ENCODE measurements at regions of chr5 and their contacts with region 1.

Region 1: DNA sequence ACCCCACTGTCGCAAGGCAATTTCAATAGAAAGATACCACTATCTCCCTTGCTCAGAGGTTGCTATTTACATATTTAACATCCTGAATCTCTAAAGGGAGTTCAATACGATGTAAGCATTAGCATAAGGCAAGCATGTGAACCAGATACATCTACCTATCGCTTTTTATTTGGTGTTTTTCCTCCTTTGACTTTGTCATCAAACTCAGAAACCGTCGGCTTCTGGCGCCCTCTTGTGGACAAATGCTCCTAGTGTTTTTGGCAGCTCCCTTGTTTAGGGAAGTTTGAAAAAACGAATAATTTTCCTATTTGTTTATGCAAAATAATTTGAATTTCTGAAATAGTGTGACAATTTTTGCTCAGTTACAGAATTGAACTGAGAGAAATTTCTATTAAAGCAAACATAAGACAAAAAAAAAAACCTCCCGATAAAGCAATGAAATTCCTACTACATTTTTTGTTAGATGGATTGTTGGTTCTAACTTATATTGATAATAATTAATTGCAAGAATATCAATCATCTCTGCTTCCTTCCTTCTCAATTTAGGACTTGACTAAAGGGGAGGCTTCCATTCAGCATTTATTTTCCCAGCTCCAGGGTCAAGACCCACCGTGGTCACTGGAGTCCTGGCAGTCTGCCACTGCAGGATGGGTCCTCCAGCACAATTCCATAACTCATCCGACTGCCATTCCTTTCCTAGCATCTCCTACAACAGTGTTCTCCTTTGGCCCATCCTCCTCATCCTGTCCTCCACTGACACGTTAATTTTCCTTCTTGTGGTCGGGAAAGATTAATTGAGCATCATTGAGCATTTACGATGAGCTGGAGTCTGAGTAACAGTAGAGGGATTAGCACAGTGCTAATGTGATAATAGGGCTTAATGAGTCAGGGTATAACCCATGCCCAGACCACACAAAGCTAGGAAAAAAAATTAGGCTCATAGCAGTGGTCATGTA is 131.8 kb upstream of the CHD1 start:
- DNase-seq: peak; percentile 54
- H3K4me3 ChIP-seq: peak overlapping the region; percentile 12 to 50; a peak in 3 of 4 replicates
- H3K27ac ChIP-seq: peak overlapping the region; percentile 75 to 93
- H3K4me1 ChIP-seq: peaks cover 7 to 18% of the 10 kb centered on the region in 2 experiments
- H3K27me3 ChIP-seq: no peaks in the 10 kb centered on the region
- CTCF ChIP-seq: peak; percentile 98
- EP300 ChIP-seq: no peak
- RAD21 ChIP-seq: peak; percentile 82

Region 2: DNA sequence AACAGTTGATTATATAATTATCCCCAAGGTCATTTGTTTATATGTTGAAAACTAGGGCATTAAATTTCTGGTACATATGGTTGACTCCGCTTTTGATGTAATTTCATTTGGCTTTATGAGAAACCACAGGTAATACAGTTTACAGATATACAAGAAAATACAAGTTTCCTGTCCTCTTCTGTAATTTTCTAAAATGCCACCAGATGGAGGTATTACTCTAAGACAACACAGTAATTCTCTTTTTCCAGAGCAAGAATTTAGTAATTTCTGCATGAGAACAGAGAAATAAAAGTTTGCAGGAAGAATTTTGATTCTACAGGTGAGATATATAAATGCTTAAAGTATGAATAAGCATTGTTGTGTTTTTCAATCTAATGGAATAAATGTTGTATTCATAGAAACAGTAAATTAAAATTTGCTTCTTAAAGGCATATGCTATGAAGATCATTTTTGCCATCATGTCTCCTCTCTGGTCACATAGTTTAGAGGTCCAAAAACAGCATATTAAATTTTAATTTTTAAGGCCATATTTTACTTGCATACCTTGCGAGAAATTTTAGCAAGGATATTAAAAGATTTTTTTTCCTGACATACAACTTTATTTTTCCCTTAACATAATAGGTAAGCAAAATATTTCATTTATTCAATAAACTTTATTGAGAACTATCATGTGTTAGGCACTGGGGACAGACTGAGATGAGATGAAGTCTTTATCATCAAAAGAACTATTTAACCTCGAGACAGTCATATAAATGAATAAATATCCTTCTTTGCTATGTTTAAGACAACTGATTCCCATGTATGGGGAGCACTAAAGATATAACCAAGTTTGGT is 154.5 kb before region 1 on chr5:
- CTCF ChIA-PET with region 1: interaction called, 10 read pairs
- POLR2A ChIA-PET with region 1: no interaction called
- DNase-seq: peak; percentile 22
- H3K4me3 ChIP-seq: no peak overlapping the region
- H3K27ac ChIP-seq: peak overlapping the region in 1 of 2 experiments; percentile 28; a peak in 2 of 4 replicates
- H3K4me1 ChIP-seq: peaks cover 0 to 25% of the 10 kb centered on the region in 2 experiments; a peak in 3 of 4 replicates
- H3K27me3 ChIP-seq: no peaks in the 10 kb centered on the region
- CTCF ChIP-seq: peak; percentile 84
- EP300 ChIP-seq: no peak
- RAD21 ChIP-seq: peak; percentile 79

Region 3: DNA sequence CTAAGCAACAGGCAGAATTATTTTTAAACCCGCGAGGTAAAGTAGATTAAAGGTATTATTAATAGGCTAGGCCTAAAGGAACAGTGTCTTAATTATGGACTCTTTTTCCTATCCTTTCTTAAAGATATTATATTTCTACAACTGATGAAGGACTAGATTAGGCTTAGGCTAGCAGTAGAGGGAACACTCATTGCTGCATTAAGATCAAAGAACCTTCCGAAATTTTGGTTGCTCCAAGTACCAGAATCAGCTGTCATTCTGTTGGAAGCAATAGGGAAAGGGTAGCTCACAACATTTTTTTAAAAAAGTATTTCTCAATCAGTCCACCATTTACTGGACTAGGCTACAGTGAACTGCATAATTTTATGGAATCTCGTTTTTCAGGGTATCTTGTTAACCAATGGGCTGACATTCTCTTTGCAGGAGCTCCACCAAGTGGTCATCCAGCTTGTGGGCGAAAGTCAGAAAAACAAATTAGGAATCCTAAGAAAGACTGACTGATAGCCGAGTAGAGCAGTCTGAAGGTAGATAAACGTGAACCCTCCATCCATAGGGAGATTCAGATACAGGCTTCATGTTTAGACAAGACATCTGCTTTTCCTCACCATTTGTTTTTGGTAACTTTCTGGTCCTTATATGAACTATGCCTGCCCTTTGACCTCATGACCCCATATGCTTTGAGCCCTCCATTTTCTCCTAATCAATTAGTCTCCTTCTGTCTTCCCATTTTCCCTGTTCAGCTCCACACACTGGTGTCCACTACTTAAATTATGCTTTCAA is 28.2 kb before region 1 on chr5:
- CTCF ChIA-PET with region 1: interaction called, 16 read pairs
- POLR2A ChIA-PET with region 1: no interaction called
- DNase-seq: peak; percentile 46
- H3K4me3 ChIP-seq: no peak overlapping the region; a peak in 1 of 4 replicates
- H3K27ac ChIP-seq: no peak overlapping the region
- H3K4me1 ChIP-seq: 0 out of 4 replicates have a peak, but pooled peaks cover 0 to 5% of the 10 kb centered on the region in 2 experiments
- H3K27me3 ChIP-seq: no peaks in the 10 kb centered on the region
- CTCF ChIP-seq: peak; percentile 91
- EP300 ChIP-seq: no peak
- RAD21 ChIP-seq: peak; percentile 94

Region 4: GRCh38 chr5:99045871-99046270 is 14.7 kb before region 1 on chr5:
- CTCF ChIA-PET with region 1: interaction called, 11 read pairs
- POLR2A ChIA-PET with region 1: no interaction called
- DNase-seq: no peak
- H3K4me3 ChIP-seq: no peak overlapping the region
- H3K27ac ChIP-seq: no peak overlapping the region
- H3K4me1 ChIP-seq: no peaks in the 10 kb centered on the region
- H3K27me3 ChIP-seq: no peaks in the 10 kb centered on the region
- CTCF ChIP-seq: no peak
- EP300 ChIP-seq: no peak
- RAD21 ChIP-seq: no peak

Region 5: GRCh38 chr5:99070822-99071221 is 10.2 kb after region 1 on chr5:
- CTCF ChIA-PET with region 1: interaction called, 14 read pairs
- POLR2A ChIA-PET with region 1: no interaction called
- DNase-seq: no peak
- H3K4me3 ChIP-seq: no peak overlapping the region
- H3K27ac ChIP-seq: no peak overlapping the region
- H3K4me1 ChIP-seq: no peaks in the 10 kb centered on the region
- H3K27me3 ChIP-seq: no peaks in the 10 kb centered on the region
- CTCF ChIP-seq: no peak
- EP300 ChIP-seq: no peak
- RAD21 ChIP-seq: no peak

Measured in SK-N-SH (cell line).